CD14-positive monocyte (primary cell): ENCODE measurements at regions of chr12 and their contacts with region 1.

Region 1: DNA sequence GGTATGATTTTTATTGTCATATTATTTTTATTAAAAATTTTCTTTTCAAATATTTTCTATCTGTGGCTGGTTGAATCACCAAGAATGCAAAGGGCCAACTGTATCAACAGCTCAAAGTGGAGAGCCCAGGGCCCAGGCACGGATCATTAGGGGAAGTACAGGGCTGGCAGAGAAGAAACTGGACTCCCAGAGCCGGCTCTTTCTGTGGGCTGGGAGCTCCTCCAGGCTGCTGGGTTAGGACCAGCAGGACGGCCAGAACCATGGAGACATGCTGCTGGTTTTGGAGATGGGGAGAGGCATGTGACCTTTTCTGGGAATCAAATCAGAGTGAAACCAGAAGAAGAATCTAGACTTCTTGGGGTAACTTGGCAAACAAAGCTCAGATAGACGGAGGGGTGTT is 220.5 kb downstream of the CACNA1C start:
- DNase-seq: no peak
- H3K4me3 ChIP-seq: no peak overlapping the region
- H3K4me3 Mint-ChIP-seq: no peak overlapping the region
- H3K27ac ChIP-seq: no peak overlapping the region
- H3K27ac Mint-ChIP-seq: peak overlapping the region in 1 of 7 donors; percentile 33
- H3K4me1 ChIP-seq: no peaks in the 10 kb centered on the region
- H3K4me1 Mint-ChIP-seq: no peaks in the 10 kb centered on the region
- H3K27me3 ChIP-seq: no peaks in the 10 kb centered on the region
- H3K27me3 Mint-ChIP-seq: peaks cover 1 to 3% (median 3%) of the 10 kb centered on the region in 3 donors
- CTCF ChIP-seq: no peak

Region 2: GRCh38 chr12:2344885-2345284 is 71.6 kb after region 1 on chr12:
- intact Hi-C with region 1: no loop called
- DNase-seq: peak in 2 of 3 donors; percentile 28 to 48
- H3K4me3 ChIP-seq: peak overlapping the region in 1 of 3 experiments; percentile 25
- H3K4me3 Mint-ChIP-seq: peak overlapping the region in 1 of 2 donors; percentile 39
- H3K27ac ChIP-seq: peak overlapping the region in 1 of 2 donors; percentile 90
- H3K27ac Mint-ChIP-seq: peak overlapping the region; percentile 5 to 86 (median 73)
- H3K4me1 ChIP-seq: peaks cover 57 to 64% of the 10 kb centered on the region in 2 donors
- H3K4me1 Mint-ChIP-seq: peaks cover 61% of the 10 kb centered on the region
- H3K27me3 ChIP-seq: no peaks in the 10 kb centered on the region
- H3K27me3 Mint-ChIP-seq: peaks cover 0 to 2% (median 0%) of the 10 kb centered on the region in 3 donors
- CTCF ChIP-seq: no peak

Region 3: DNA sequence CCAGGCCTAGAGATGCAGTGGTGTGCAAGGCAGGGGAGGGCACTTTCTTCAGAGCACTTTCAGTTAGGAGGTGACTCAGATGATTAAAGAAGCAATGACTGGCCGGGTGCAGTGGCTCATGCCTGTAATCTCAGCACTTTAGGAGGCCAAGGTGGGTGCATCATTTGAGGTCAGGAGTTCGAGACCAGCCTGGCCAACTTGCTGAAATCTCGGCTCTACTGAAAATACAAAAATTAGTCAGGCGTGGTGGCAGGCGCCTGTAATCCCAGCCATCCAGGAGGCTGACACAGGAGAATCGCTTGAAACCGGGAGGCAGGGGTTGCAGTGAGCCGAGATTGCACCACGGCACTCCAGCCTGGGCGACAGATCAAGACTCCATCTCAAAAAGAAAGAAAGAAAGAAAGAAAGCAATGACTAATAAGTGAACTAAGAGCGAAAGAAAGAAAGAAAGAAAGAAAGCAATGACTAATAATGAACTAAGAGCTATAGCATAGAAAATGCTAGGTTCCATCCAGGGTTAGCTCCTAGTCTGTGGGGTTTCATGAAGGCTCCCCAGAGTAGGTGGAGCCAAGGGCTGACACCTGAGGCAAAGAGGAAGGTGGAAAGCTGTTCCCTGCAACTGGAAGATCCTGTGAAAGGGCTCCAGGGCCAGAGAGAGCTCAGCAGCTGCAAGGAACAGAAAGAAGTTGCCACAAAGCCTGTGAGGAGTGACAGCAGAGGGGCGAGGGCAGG is 114.0 kb after region 1 on chr12:
- intact Hi-C with region 1: loop called in 1 of 2 experiments (anchors 10 kb)
- DNase-seq: no peak
- H3K4me3 ChIP-seq: no peak overlapping the region
- H3K4me3 Mint-ChIP-seq: no peak overlapping the region
- H3K27ac ChIP-seq: no peak overlapping the region
- H3K27ac Mint-ChIP-seq: no peak overlapping the region
- H3K4me1 ChIP-seq: peaks cover 15 to 19% of the 10 kb centered on the region in 2 donors
- H3K4me1 Mint-ChIP-seq: peaks cover 20% of the 10 kb centered on the region
- H3K27me3 ChIP-seq: no peaks in the 10 kb centered on the region
- H3K27me3 Mint-ChIP-seq: peaks cover 0 to 5% (median 3%) of the 10 kb centered on the region in 3 donors
- CTCF ChIP-seq: no peak